A673 (cell line): ENCODE measurements at regions of chr1 and their contacts with region 1.

Region 1: DNA sequence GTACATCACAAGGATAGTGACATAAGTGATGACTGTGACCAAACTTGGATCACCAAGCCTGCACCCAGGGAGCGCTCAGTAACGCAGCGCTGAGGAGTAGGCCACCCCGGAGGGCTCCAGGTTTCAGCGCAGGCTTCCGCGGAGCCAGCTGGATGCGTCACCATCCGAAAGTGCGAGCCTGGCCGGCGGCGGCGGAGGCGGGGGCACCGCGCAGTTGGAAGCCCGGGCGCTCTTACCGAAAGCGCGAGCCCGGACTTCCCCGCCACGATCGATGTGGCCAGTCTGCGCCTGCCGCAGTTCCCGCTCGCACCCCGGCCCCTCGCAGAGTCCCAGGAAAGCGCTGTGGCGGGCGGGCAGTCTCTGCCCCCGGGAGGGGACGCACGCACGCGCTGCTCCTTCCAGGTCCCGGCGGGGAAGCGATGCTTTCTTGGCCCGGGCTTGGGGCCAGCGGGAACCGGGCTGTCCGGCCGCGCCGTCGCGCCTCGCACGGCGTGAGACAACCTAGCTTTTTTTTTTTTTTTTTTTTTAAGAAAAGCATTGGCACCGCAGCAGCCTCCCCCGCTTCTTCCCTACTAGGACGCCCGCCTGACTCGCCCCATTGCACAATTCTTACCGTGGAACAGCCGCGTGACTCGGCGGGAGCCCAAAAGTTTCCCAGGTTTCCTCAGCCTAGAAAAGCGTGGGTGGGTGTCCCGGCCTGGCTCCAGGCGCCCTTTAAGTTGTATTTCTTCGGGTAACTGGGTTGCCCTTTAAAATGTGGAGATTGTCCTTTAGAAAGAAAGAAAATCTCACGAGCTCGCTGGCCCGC is 36.4 kb upstream of the JAK1 start:
- DNase-seq: peak; percentile 90
- H3K4me3 ChIP-seq: peak overlapping the region; percentile 57
- H3K27ac ChIP-seq: peak overlapping the region; percentile 94
- H3K4me1 ChIP-seq: peaks cover 30% of the 10 kb centered on the region
- H3K27me3 ChIP-seq: no peaks in the 10 kb centered on the region
- CTCF ChIP-seq: no peak

Region 2: GRCh38 chr1:64933296-64934070 is 69.2 kb before region 1 on chr1:
- CTCF ChIA-PET with region 1: no interaction called
- POLR2A ChIA-PET with region 1: no interaction called
- intact Hi-C with region 1: no loop called
- DNase-seq: peak; percentile 54
- H3K4me3 ChIP-seq: peak overlapping the region; percentile 6
- H3K27ac ChIP-seq: peak overlapping the region; percentile 80
- H3K4me1 ChIP-seq: peaks cover 61% of the 10 kb centered on the region
- H3K27me3 ChIP-seq: no peaks in the 10 kb centered on the region
- CTCF ChIP-seq: no peak

Region 3: GRCh38 chr1:64966158-64966971 is 36.3 kb before region 1 on chr1 and contains the start of gene JAK1:
- CTCF ChIA-PET with region 1: no interaction called
- POLR2A ChIA-PET with region 1: interaction called, 5 read pairs
- intact Hi-C with region 1: loop called (anchors 5 kb)
- DNase-seq: peak; percentile 90
- H3K4me3 ChIP-seq: peak within 1 kb of the TSS; percentile 83
- H3K27ac ChIP-seq: peak within 1 kb of the TSS; percentile 90
- H3K4me1 ChIP-seq: peaks cover 47% of the 10 kb centered on the region
- H3K27me3 ChIP-seq: no peaks in the 10 kb centered on the region
- CTCF ChIP-seq: no peak
- total RNA-seq, gene JAK1: 318 and 339 TPM in 2 replicates

Region 4: GRCh38 chr1:65372557-65372956 is 369.8 kb after region 1 on chr1:
- CTCF ChIA-PET with region 1: no interaction called
- POLR2A ChIA-PET with region 1: no interaction called
- intact Hi-C with region 1: no loop called
- DNase-seq: no peak
- H3K4me3 ChIP-seq: no peak overlapping the region
- H3K27ac ChIP-seq: no peak overlapping the region
- H3K4me1 ChIP-seq: no peaks in the 10 kb centered on the region
- H3K27me3 ChIP-seq: no peaks in the 10 kb centered on the region
- CTCF ChIP-seq: no peak